Panc1 (cell line): ENCODE measurements at regions of chr2 and their contacts with region 1.

Region 1: GRCh38 chr2:205688417-205689200 is 6.3 kb downstream of the NRP2 start:
- DNase-seq: no peak
- ATAC-seq: no peak
- H3K4me3 ChIP-seq: no peak overlapping the region
- H3K27ac ChIP-seq: no peak overlapping the region
- H3K4me1 ChIP-seq: no peaks in the 10 kb centered on the region
- H3K27me3 ChIP-seq: peaks cover 21% of the 10 kb centered on the region
- CTCF ChIP-seq: no peak

Region 2: GRCh38 chr2:205650450-205650849 is 38.2 kb before region 1 on chr2:
- CTCF ChIA-PET with region 1: no interaction called
- POLR2A ChIA-PET with region 1: no interaction called
- in situ Hi-C with region 1: no loop called
- intact Hi-C with region 1: no loop called
- DNase-seq: no peak
- ATAC-seq: no peak
- H3K4me3 ChIP-seq: no peak overlapping the region
- H3K27ac ChIP-seq: no peak overlapping the region
- H3K4me1 ChIP-seq: no peaks in the 10 kb centered on the region
- H3K27me3 ChIP-seq: no peaks in the 10 kb centered on the region
- CTCF ChIP-seq: no peak

Region 3: GRCh38 chr2:205670293-205670692 is 18.3 kb before region 1 on chr2:
- CTCF ChIA-PET with region 1: interaction called, 10 read pairs
- POLR2A ChIA-PET with region 1: no interaction called
- in situ Hi-C with region 1: no loop called
- intact Hi-C with region 1: no loop called
- DNase-seq: no peak
- ATAC-seq: no peak
- H3K4me3 ChIP-seq: no peak overlapping the region
- H3K27ac ChIP-seq: no peak overlapping the region
- H3K4me1 ChIP-seq: no peaks in the 10 kb centered on the region
- H3K27me3 ChIP-seq: no peaks in the 10 kb centered on the region
- CTCF ChIP-seq: no peak

Region 4: GRCh38 chr2:205715831-205716525 is 27.4 kb after region 1 on chr2:
- CTCF ChIA-PET with region 1: no interaction called
- POLR2A ChIA-PET with region 1: no interaction called
- in situ Hi-C with region 1: no loop called
- intact Hi-C with region 1: loop called (anchors 1 kb)
- DNase-seq: no peak
- ATAC-seq: peak; percentile 64
- H3K4me3 ChIP-seq: no peak overlapping the region
- H3K27ac ChIP-seq: no peak overlapping the region
- H3K4me1 ChIP-seq: no peaks in the 10 kb centered on the region
- H3K27me3 ChIP-seq: no peaks in the 10 kb centered on the region
- CTCF ChIP-seq: peak; percentile 50